ENCODE measurements at regions of chr19 and their contacts with region 1.

Region 1: GRCh38 chr19:29680447-29680846 is 15.2 kb downstream of the PLEKHF1 start:
- DNase-seq: peak in 1 of 2 donors; percentile 78
- ATAC-seq: no peak
- H3K4me3 ChIP-seq: no peak overlapping the region
- H3K27ac ChIP-seq: peak overlapping the region; percentile 16 to 22
- H3K4me1 ChIP-seq: peaks cover 0 to 4% of the 10 kb centered on the region in 2 donors
- H3K27me3 ChIP-seq: no peaks in the 10 kb centered on the region

Region 2: DNA sequence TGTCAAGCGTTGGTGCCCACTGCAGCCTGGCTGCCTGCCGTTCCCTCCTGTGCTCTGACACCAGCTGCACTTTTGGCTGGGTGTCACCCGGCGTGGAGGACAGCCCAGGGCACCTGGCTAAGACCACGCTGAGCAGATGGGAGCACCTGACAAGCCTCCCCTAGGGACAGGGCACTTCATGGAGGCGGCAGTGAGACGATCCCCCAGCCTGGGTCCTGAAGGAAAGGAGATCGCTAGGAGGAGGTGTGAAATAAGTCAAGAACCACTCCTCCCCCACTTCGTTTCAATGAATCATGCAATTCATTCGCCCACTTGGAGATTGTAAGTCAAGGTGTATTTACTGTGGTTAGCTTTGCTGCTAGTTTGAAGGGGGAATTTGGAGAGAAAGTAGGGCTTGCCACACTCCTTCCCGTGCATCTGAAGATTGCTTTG is 115.9 kb before region 1 on chr19:
- intact Hi-C with region 1: no loop called
- DNase-seq: no peak
- ATAC-seq: no peak
- H3K4me3 ChIP-seq: no peak overlapping the region
- H3K27ac ChIP-seq: no peak overlapping the region
- H3K4me1 ChIP-seq: no peaks in the 10 kb centered on the region
- H3K27me3 ChIP-seq: no peaks in the 10 kb centered on the region

Region 3: DNA sequence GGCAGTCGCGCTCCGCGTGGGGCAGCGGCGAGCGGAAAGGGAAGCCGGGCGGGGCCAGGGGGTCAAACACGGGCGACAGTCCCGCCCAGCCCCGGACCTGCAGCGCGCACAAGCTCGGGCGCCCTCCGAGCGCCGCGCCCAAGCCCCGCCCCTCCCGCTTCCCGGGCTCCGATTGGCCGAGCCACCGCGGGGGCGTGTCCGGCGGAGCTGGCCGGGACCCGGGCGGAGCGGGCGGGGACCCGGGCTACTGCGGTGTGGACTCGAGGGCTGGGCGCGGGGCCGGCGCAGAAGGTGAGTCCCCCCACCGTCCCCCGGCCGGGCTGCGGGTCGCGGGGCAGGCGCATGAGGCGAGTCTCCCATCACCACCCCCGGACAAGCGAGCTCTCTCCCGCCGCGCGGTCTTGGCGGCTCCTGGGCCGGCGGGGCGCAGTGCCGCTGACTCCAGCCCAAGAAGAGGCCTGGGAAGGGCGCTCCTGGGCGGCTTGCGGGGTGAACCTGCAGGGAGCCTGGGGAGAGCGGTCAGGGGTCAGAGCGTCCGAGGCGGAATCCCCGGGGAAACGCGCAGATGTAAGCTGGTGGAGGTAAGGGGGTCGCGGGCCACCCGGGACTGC is 15.1 kb before region 1 on chr19 and contains the start of gene PLEKHF1:
- intact Hi-C with region 1: loop called in 1 of 2 experiments (anchors 2 kb)
- DNase-seq: peak; percentile 94 to 96
- ATAC-seq: peak; percentile 93
- H3K4me3 ChIP-seq: peak within 1 kb of the TSS; percentile 57 to 80
- H3K27ac ChIP-seq: peak within 1 kb of the TSS; percentile 60 to 92
- H3K4me1 ChIP-seq: peaks cover 0 to 2% of the 10 kb centered on the region in 2 donors
- H3K27me3 ChIP-seq: no peaks in the 10 kb centered on the region
- total RNA-seq, gene PLEKHF1: 10.8 to 17.5 TPM